Activated CD4-positive, alpha-beta T cell treated with anti-CD3 and anti-CD28 coated beads for 36 hours (primary cell): ENCODE measurements at regions of chr9 and their contacts with region 1.

Region 1: DNA sequence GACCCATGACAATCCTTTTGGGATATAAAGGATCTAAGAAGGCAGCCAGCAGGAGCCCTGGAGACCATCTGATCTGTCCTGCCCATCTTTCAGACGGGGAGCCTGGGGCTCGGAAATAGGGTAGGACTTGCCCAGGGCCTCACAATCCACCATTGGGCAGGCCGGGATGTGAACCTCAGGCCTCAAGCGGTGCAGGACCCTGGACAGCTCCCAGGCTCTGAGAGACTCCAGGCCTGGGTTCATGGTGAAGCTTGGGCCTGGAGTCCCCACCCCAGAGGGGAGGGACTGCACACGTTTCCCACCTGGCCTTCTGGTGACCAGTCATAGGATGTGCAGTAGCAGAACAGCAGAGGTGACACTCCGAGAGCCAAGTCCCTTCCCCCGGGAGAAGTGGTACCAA is 36.6 kb upstream of the RAPGEF1 start:
- DNase-seq: peak; percentile 70
- ATAC-seq: no peak
- H3K4me3 Mint-ChIP-seq: no peak overlapping the region
- H3K27ac Mint-ChIP-seq: no peak overlapping the region
- H3K4me1 Mint-ChIP-seq: peaks cover 2% of the 10 kb centered on the region
- H3K27me3 Mint-ChIP-seq: peaks cover 8% of the 10 kb centered on the region

Region 2: GRCh38 chr9:131799177-131799823 is 22.8 kb after region 1 on chr9:
- CTCF ChIA-PET with region 1: interaction called, 4 read pairs
- POLR2A ChIA-PET with region 1: no interaction called
- intact Hi-C with region 1: loop called in 1 of 2 experiments (anchors 1 kb)
- DNase-seq: peak; percentile 80
- ATAC-seq: no peak
- H3K4me3 Mint-ChIP-seq: no peak overlapping the region
- H3K27ac Mint-ChIP-seq: no peak overlapping the region
- H3K4me1 Mint-ChIP-seq: no peaks in the 10 kb centered on the region
- H3K27me3 Mint-ChIP-seq: peaks cover 24% of the 10 kb centered on the region

Region 3: DNA sequence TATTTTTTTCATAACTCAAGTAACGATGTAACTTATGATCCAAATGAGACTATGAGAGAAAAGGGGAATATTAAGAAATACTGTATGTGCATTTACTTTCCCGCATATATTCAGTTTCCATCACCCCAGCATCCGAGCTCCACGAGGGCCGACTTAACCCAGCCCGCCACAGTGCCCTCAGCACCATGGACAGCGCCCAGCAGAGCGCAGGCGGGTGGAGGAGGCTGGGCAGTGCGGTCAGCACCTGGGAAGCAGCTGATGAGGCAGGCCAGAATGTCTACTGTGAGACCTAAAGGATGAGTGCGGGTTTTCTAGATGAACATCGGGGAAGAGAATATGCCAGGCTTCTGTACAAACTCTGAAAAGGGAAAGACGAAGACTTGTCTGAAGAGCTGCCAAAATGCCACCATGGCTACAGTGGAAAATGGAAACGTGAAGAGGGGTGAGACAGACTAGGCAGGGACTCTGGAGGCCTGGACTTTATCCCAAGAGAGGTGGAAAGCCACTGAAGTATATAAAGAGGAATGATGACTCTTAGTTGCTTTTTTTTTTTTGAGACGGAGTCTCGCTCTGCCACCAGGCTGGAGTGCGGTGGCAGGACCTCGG is 337.7 kb after region 1 on chr9:
- CTCF ChIA-PET with region 1: no interaction called
- POLR2A ChIA-PET with region 1: interaction called, 4 read pairs
- intact Hi-C with region 1: loop called in 1 of 2 experiments (anchors 5 kb)
- DNase-seq: peak; percentile 74
- ATAC-seq: no peak
- H3K4me3 Mint-ChIP-seq: no peak overlapping the region
- H3K27ac Mint-ChIP-seq: no peak overlapping the region
- H3K4me1 Mint-ChIP-seq: no peaks in the 10 kb centered on the region
- H3K27me3 Mint-ChIP-seq: peaks cover 31% of the 10 kb centered on the region

Region 4: GRCh38 chr9:132181796-132182313 is 405.4 kb after region 1 on chr9:
- CTCF ChIA-PET with region 1: no interaction called
- POLR2A ChIA-PET with region 1: no interaction called
- intact Hi-C with region 1: no loop called
- DNase-seq: no peak
- ATAC-seq: no peak
- H3K4me3 Mint-ChIP-seq: no peak overlapping the region
- H3K27ac Mint-ChIP-seq: no peak overlapping the region
- H3K4me1 Mint-ChIP-seq: no peaks in the 10 kb centered on the region
- H3K27me3 Mint-ChIP-seq: peaks cover 5% of the 10 kb centered on the region